MCF 10A (cell line): ENCODE measurements at regions of chr17 and their contacts with region 1.

Region 1: GRCh38 chr17:1684378-1685189 is at the start of gene PRPF8:
- DNase-seq: peak; percentile 97
- H3K4me3 Mint-ChIP-seq: peak within 1 kb of the TSS; percentile 88
- H3K27ac Mint-ChIP-seq: peak within 1 kb of the TSS; percentile 94
- H3K4me1 Mint-ChIP-seq: peaks cover 24% of the 10 kb centered on the region
- H3K27me3 Mint-ChIP-seq: no peaks in the 10 kb centered on the region
- CTCF ChIP-seq: no peak
- total RNA-seq, gene PRPF8: 239 and 261 TPM in 2 replicates

Region 2: DNA sequence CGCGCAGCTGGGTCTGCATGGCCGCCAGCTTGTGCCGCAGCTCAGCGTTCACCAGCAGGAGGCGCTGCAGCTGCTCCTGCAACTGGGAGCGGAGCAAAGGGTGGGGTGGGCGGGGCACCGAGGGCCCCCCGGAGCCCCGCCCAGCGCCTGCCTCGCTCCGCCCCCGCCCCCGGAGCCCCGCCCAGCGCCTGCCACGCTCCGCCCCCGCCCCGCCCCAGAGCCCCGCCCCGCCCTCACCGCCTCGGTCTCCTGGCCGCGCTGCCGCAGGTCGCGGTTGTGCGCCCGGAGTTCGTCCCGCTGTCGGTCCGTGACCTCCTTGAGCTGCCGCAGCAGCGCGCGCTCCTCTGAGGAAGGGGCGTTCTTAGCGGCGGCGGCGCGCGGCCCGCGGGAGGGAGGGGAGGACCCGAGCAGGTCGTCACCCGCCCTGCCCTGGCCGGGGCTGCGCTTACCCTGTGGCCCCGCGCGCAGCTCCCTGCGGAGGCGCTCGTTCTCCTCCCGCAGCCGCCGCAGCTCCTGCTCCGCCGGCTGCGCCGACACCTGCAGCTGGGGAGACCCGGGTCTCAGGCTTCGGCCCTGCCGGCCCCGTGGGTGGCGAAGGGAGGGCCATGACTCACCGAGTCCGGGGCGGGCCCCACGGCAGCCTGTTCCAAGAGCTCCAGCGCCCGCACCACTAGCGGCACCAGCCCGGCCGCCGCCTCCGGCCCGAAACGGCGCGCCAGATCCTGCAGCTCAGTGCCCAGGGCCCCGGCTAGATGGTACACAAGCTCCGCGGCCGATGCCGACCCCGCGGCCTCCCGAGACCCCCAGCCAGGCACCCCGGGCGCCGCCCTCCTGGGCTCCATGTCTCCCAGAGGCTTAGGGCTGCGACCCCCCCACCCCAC is 35.4 kb before region 1 on chr17:
- CTCF ChIA-PET with region 1: no interaction called
- POLR2A ChIA-PET with region 1: interaction called, 48 read pairs
- intact Hi-C with region 1: no loop called
- DNase-seq: peak; percentile 89
- H3K4me3 Mint-ChIP-seq: peak overlapping the region; percentile 70
- H3K27ac Mint-ChIP-seq: peak overlapping the region; percentile 23
- H3K4me1 Mint-ChIP-seq: peaks cover 4% of the 10 kb centered on the region
- H3K27me3 Mint-ChIP-seq: no peaks in the 10 kb centered on the region
- CTCF ChIP-seq: peak; percentile 82

Region 3: DNA sequence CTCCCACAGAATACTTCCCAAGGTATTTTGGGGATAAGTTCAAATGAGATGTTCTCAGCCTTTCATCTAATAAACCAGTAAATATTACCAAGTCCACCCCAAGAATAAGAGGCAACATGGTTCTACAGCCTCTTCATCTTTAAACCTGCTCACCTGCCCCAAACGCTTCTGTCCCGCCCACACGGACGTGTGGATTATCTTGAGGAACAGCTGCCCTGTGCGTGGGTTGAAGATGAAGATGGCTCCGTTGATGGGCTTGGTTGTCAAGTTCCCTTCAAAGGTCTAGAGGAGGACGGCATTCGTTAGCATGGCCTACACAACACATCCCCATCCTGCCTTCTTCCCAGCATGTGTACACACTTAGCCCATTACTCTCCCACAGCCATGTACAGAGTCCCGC is 26.5 kb before region 1 on chr17:
- CTCF ChIA-PET with region 1: interaction called, 4 read pairs
- POLR2A ChIA-PET with region 1: interaction called, 24 read pairs
- intact Hi-C with region 1: no loop called
- DNase-seq: no peak
- H3K4me3 Mint-ChIP-seq: no peak overlapping the region
- H3K27ac Mint-ChIP-seq: no peak overlapping the region
- H3K4me1 Mint-ChIP-seq: no peaks in the 10 kb centered on the region
- H3K27me3 Mint-ChIP-seq: no peaks in the 10 kb centered on the region
- CTCF ChIP-seq: no peak

Region 4: DNA sequence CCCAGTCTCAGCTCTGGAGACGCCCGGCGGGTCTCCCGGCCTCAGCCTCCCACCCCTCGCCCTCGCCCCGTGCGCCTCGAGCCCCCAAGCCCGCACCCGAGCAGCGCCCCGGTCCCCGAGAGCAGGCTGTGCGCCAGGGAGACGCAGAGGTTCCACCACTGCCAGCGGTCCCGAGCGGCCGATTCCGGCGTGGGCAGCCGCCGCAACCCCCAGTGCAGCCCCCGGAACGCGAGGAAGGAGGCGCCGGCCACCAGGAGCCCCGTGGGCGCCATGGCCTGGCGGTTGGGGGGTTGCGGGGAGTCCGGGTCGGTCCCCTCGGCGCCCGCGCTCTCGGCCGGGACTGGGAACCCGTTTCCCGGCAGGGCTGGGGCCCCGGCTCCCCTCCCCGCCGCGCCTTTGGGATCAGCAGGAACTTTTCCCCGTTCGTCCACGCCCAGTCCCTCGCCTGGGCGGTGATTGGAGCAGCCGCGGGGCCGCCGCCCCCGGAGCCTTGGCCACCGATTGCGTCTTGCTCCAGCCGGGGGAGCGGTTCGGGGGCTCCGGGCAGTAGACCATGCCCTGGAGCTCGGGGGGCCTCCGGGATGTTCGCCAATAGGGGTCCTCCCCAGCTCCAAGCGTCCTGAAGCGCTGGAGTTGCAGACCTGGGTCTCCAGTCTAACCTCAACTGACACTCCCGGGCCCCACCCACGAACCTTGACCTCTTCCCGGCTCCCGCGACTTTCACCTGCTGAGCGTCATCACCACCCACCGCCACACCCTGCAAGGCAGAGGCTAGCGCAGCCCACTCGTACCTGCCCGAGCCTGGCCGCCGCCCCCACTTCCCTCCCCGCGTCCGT is 25.6 kb after region 1 on chr17 and contains the start of gene TLCD2:
- CTCF ChIA-PET with region 1: interaction called, 4 read pairs
- POLR2A ChIA-PET with region 1: interaction called, 112 read pairs
- intact Hi-C with region 1: loop called (anchors 1 kb)
- DNase-seq: peak; percentile 67
- H3K4me3 Mint-ChIP-seq: peak within 1 kb of the TSS; percentile 68
- H3K27ac Mint-ChIP-seq: peak within 1 kb of the TSS; percentile 16
- H3K4me1 Mint-ChIP-seq: peaks cover 21% of the 10 kb centered on the region
- H3K27me3 Mint-ChIP-seq: no peaks in the 10 kb centered on the region
- CTCF ChIP-seq: no peak
- total RNA-seq, gene TLCD2: 2.5 and 4.0 TPM in 2 replicates